ENCODE measurements at regions of chr2 and their contacts with region 1.

Region 1: GRCh38 chr2:240143801-240144648 is 3.6 kb upstream of the OTOS start:
- DNase-seq: peak; percentile 53 to 82 (median 72)
- H3K4me3 ChIP-seq: no peak overlapping the region
- H3K27ac ChIP-seq: no peak overlapping the region
- H3K4me1 ChIP-seq: peaks cover 2% of the 10 kb centered on the region
- H3K27me3 ChIP-seq: no peaks in the 10 kb centered on the region
- CTCF ChIP-seq: peak; percentile 83 to 89 (median 86)
- EP300 ChIP-seq: no peak
- POLR2A ChIP-seq: no peak

Region 2: DNA sequence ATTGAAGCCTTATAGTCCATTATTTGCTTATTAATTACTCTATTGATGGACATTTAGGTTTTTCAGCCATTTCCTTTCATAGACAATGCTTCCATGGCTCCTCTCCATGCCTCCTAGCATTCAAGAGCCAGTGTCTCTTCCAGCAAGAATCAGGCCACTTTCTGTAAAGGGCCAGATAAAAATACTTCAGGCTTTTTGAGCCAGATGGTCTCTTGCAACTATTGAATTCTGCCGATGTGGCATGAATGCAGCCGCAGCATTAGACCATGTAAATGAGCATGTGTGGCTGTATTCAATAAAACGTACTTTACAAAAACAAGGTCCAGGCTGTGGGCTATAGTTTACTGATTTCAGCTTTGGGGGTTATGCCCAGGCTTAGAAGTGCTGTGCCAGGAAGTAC is 1785.3 kb before region 1 on chr2:
- intact Hi-C with region 1: loop called in 1 of 4 experiments (anchors 5 kb)
- DNase-seq: no peak
- H3K4me3 ChIP-seq: no peak overlapping the region
- H3K27ac ChIP-seq: no peak overlapping the region
- H3K4me1 ChIP-seq: no peaks in the 10 kb centered on the region
- H3K27me3 ChIP-seq: no peaks in the 10 kb centered on the region
- CTCF ChIP-seq: no peak
- EP300 ChIP-seq: no peak
- POLR2A ChIP-seq: no peak

Region 3: GRCh38 chr2:240032406-240033329 is 111.4 kb before region 1 on chr2:
- intact Hi-C with region 1: no loop called
- DNase-seq: no peak
- H3K4me3 ChIP-seq: no peak overlapping the region
- H3K27ac ChIP-seq: no peak overlapping the region
- H3K4me1 ChIP-seq: no peaks in the 10 kb centered on the region
- H3K27me3 ChIP-seq: no peaks in the 10 kb centered on the region
- CTCF ChIP-seq: no peak
- EP300 ChIP-seq: no peak
- POLR2A ChIP-seq: no peak

Region 4: GRCh38 chr2:240051697-240052096 is 92.3 kb before region 1 on chr2:
- intact Hi-C with region 1: loop called in 1 of 4 experiments (anchors 10 kb)
- DNase-seq: no peak
- H3K4me3 ChIP-seq: no peak overlapping the region
- H3K27ac ChIP-seq: no peak overlapping the region
- H3K4me1 ChIP-seq: no peaks in the 10 kb centered on the region
- H3K27me3 ChIP-seq: no peaks in the 10 kb centered on the region
- CTCF ChIP-seq: no peak
- EP300 ChIP-seq: no peak
- POLR2A ChIP-seq: no peak

Region 5: GRCh38 chr2:240060977-240061591 is 82.9 kb before region 1 on chr2:
- intact Hi-C with region 1: loop called in 3 of 4 experiments (anchors 5 to 10 kb)
- DNase-seq: peak in 1 of 5 donors; percentile 27
- H3K4me3 ChIP-seq: no peak overlapping the region
- H3K27ac ChIP-seq: no peak overlapping the region
- H3K4me1 ChIP-seq: no peaks in the 10 kb centered on the region
- H3K27me3 ChIP-seq: no peaks in the 10 kb centered on the region
- CTCF ChIP-seq: peak in 2 of 3 donors; percentile 30 to 31
- EP300 ChIP-seq: no peak
- POLR2A ChIP-seq: no peak

Measured in ovary (tissue), 10 donors.